GM10248 (cell line): ENCODE measurements at regions of chr5 and their contacts with region 1.

Region 1: GRCh38 chr5:176965633-176966032 is 40.9 kb downstream of the UIMC1 start:
- DNase-seq: no peak
- CTCF ChIP-seq: no peak

Region 2: DNA sequence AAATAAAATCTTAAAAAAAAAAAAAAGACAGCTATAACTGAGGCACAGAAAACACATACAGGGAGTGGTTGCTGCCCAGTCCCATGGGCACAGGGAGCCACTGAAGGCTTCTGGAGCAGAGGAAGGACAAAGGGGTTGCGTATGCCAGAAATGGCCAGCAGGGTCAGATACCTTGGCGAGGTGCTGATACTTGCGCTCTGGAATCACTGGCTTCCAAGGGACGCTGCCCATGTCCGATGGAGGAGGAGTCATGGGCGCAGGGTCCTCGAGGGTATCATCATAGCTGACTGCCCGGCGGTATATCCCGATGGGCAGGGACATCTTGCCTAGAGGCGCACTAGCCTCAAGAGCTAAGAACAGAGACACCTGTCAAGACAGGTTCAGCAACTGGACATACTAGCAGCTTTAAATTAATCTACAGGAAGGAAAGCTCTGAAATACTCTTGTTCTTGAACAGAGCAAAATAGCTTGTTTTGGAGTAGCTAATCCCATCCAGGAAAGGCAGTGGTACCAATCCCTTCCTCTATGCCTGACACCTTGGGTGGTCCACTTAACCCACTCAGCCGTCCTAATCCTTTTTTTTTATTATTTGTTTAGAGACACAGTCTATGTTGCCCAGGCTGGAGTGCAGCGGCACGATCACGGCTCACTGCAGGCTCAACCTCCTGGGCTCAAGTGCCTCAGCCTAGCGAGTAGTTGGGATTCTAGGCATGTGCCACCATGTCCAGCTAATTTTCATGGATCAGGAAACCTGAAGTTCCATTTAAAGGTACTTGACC is 610.0 kb before region 1 on chr5:
- CTCF ChIA-PET with region 1: no interaction called
- POLR2A ChIA-PET with region 1: no interaction called
- DNase-seq: no peak
- CTCF ChIP-seq: no peak

Region 3: GRCh38 chr5:176980818-176981217 is 15.2 kb after region 1 on chr5:
- CTCF ChIA-PET with region 1: interaction called, 10 read pairs
- POLR2A ChIA-PET with region 1: no interaction called
- DNase-seq: no peak
- CTCF ChIP-seq: no peak

Region 4: GRCh38 chr5:177022384-177023308 is 57.0 kb after region 1 on chr5 and contains the start of gene ZNF346:
- CTCF ChIA-PET with region 1: no interaction called
- POLR2A ChIA-PET with region 1: no interaction called
- DNase-seq: peak; percentile 98
- CTCF ChIP-seq: peak; percentile 58